ENCODE measurements at regions of chr10 and their contacts with region 1.

Region 1: GRCh38 chr10:7410862-7411670 is at the start of gene SFMBT2:
- DNase-seq: peak; percentile 75
- ATAC-seq: peak; percentile 67 to 73
- H3K4me3 ChIP-seq: peak within 1 kb of the TSS; percentile 76
- H3K27ac ChIP-seq: peak within 1 kb of the TSS; percentile 86 to 96
- H3K4me1 ChIP-seq: peaks cover 23% of the 10 kb centered on the region
- CTCF ChIP-seq: no peak
- EP300 ChIP-seq: no peak
- POLR2A ChIP-seq: peak; percentile 25; the same call in 1 of the 2 replicates
- RAD21 ChIP-seq: no peak; a peak in 1 of 5 replicates
- polyA plus RNA-seq, gene SFMBT2: 10.2 and 10.3 TPM in 2 replicates

Region 2: DNA sequence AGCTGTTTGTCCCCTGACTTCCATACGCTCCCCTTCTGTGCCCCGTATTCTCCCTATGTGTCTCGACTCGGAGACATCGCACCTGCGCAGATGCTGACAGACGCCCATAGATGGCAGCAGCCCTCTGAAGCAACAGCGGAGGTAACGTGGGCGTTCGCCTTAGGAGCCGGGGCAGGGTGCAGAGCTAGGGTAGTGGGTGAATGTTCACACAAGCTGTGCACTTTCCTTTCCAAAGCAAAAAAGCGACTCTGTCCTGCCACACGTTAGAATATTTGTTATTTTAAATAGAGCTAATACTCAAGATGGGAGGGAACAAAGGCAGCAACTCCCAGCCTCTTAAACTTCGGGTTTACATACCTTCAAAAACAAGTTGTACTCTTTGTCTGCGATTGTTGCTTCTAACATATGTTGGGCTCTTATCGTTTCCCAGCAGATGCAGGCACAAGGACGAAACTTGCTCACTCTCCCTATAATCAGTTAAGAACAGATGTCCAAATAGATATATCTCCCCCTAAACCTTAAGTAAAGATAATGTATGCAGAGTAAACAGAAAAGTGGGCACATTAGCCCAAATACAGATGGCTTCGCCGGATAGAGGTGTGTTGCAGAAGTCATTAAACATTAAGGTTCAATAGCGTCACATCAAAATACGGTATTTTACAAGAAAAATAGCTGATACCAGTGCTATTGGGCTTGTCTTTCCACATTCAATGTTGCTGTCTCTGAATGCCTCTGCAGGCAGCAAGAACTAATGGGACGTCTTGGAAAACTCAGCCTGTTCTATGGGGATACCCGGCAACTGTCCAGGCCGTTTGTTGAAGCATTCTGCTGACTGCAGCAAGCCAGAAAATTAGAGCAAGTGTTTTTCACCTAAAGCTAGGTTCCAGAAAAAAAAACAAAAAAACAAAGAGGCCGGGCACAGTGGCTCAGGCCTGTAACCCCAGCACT is 490.7 kb before region 1 on chr10:
- CTCF ChIA-PET with region 1: interaction called, 26 read pairs
- POLR2A ChIA-PET with region 1: interaction called, 4 read pairs
- DNase-seq: peak; percentile 68 to 72
- ATAC-seq: peak; percentile 99
- H3K4me3 ChIP-seq: 0 out of 3 replicates have a peak overlapping the region, but pooled peaks have one; percentile 10
- H3K27ac ChIP-seq: 0 out of 6 replicates have a peak overlapping the region, but pooled peaks of 1 of the 2 experiments have one; percentile 25
- H3K4me1 ChIP-seq: peaks cover 10% of the 10 kb centered on the region; the same call in 2 of the 3 replicates
- CTCF ChIP-seq: peak; percentile 72
- EP300 ChIP-seq: no peak
- POLR2A ChIP-seq: no peak
- RAD21 ChIP-seq: peak; percentile 80 to 86

Region 3: DNA sequence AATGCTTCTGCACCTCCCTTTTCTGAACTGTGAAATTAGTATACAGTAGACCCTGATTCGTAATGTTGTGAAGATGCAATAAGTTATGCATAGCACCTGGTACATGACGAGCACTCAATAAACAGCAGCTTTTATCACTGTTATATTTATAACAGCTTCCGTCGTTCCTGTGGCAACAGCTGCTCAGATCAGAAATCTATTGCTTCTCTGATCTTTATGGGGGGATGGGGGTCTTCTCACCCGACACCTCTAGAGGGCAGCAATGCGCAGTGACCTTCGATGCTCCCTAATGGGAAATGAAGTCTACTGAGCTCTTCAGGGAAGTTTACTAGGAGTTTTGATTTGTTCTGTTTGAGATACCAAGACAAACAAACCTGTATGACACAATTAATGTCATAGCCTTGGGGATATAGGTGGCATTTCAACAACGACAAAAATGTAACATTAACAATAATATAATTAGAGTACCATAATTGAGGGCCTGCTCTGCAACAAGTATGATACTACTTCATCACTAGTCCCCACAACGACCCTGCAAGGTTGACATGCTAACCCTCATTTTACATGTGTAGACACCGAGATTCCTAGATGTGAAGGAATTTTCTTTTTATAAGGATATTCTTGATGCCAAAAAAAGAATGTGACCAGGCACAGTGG is 289.8 kb before region 1 on chr10:
- CTCF ChIA-PET with region 1: interaction called, 31 read pairs
- POLR2A ChIA-PET with region 1: interaction called, 11 read pairs
- DNase-seq: peak; percentile 62 to 71
- ATAC-seq: peak; percentile 33 to 88; a peak in 4 of 6 replicates
- H3K4me3 ChIP-seq: no peak overlapping the region
- H3K27ac ChIP-seq: no peak overlapping the region
- H3K4me1 ChIP-seq: no peaks in the 10 kb centered on the region
- CTCF ChIP-seq: peak; percentile 74
- EP300 ChIP-seq: no peak
- POLR2A ChIP-seq: no peak
- RAD21 ChIP-seq: peak; percentile 71 to 78; a peak in 4 of 5 replicates

Region 4: GRCh38 chr10:7260412-7260900 is 150.6 kb before region 1 on chr10:
- CTCF ChIA-PET with region 1: interaction called, 24 read pairs
- POLR2A ChIA-PET with region 1: no interaction called
- DNase-seq: peak; percentile 74 to 88
- ATAC-seq: peak; percentile 86 to 87
- H3K4me3 ChIP-seq: no peak overlapping the region
- H3K27ac ChIP-seq: peak overlapping the region; percentile 60 to 84
- H3K4me1 ChIP-seq: peaks cover 62% of the 10 kb centered on the region
- CTCF ChIP-seq: peak; percentile 71
- EP300 ChIP-seq: peak; percentile 58 to 83; a peak in 3 of 5 replicates
- POLR2A ChIP-seq: no peak
- RAD21 ChIP-seq: peak; percentile 64 to 77

Region 5: GRCh38 chr10:7337431-7338171 is 73.5 kb before region 1 on chr10:
- CTCF ChIA-PET with region 1: interaction called, 3 read pairs
- POLR2A ChIA-PET with region 1: interaction called, 12 read pairs
- DNase-seq: no peak
- ATAC-seq: no peak
- H3K4me3 ChIP-seq: no peak overlapping the region
- H3K27ac ChIP-seq: no peak overlapping the region
- H3K4me1 ChIP-seq: peaks cover 16% of the 10 kb centered on the region
- CTCF ChIP-seq: no peak
- EP300 ChIP-seq: no peak
- POLR2A ChIP-seq: no peak
- RAD21 ChIP-seq: no peak

Region 6: GRCh38 chr10:7373039-7373438 is 38.0 kb before region 1 on chr10:
- CTCF ChIA-PET with region 1: interaction called, 12 read pairs
- POLR2A ChIA-PET with region 1: no interaction called
- DNase-seq: no peak
- ATAC-seq: no peak
- H3K4me3 ChIP-seq: no peak overlapping the region
- H3K27ac ChIP-seq: peak overlapping the region in 1 of 2 experiments; percentile 42; a peak in 2 of 6 replicates
- H3K4me1 ChIP-seq: peaks cover 26% of the 10 kb centered on the region
- CTCF ChIP-seq: no peak
- EP300 ChIP-seq: no peak
- POLR2A ChIP-seq: no peak
- RAD21 ChIP-seq: no peak

Measured in A549 (cell line).